SK-N-SH (cell line): ENCODE measurements at regions of chr5 and their contacts with region 1.

Region 1: GRCh38 chr5:177113566-177114424 is 19.8 kb upstream of the NSD1 start:
- DNase-seq: peak; percentile 89
- H3K4me3 ChIP-seq: no peak overlapping the region; a peak in 1 of 4 replicates
- H3K27ac ChIP-seq: no peak overlapping the region
- H3K4me1 ChIP-seq: no peaks in the 10 kb centered on the region; a peak in 1 of 4 replicates
- H3K27me3 ChIP-seq: no peaks in the 10 kb centered on the region
- CTCF ChIP-seq: peak; percentile 99
- EP300 ChIP-seq: no peak
- RAD21 ChIP-seq: peak; percentile 99

Region 2: DNA sequence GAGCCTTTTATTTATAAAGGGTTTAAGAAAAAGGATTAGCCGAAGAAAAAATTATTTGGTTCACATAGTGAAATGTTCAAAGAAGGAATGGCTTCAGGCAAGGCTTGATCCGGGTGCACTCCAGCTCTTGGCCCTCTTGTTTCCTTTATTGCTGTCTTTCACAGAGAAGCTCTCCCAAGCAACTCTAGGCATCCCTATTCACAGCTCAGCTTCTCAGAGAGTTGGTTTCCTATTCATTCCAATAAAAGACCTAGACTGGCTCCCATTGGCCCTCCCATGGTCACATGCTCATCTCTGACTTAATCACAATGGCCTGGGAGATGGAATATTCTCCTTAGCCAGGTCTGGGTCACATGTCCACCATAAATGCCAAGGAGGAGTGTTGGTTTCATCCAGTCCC is 36.5 kb before region 1 on chr5:
- CTCF ChIA-PET with region 1: interaction called, 141 read pairs
- POLR2A ChIA-PET with region 1: no interaction called
- DNase-seq: no peak
- H3K4me3 ChIP-seq: no peak overlapping the region
- H3K27ac ChIP-seq: no peak overlapping the region
- H3K4me1 ChIP-seq: no peaks in the 10 kb centered on the region
- H3K27me3 ChIP-seq: no peaks in the 10 kb centered on the region
- CTCF ChIP-seq: no peak
- EP300 ChIP-seq: no peak
- RAD21 ChIP-seq: no peak

Region 3: GRCh38 chr5:177094224-177095087 is 19.3 kb before region 1 on chr5:
- CTCF ChIA-PET with region 1: interaction called, 87 read pairs
- POLR2A ChIA-PET with region 1: no interaction called
- DNase-seq: peak; percentile 66
- H3K4me3 ChIP-seq: no peak overlapping the region
- H3K27ac ChIP-seq: no peak overlapping the region
- H3K4me1 ChIP-seq: peaks cover 0 to 16% of the 10 kb centered on the region in 2 experiments; a peak in 1 of 4 replicates
- H3K27me3 ChIP-seq: no peaks in the 10 kb centered on the region
- CTCF ChIP-seq: no peak
- EP300 ChIP-seq: no peak
- RAD21 ChIP-seq: no peak

Region 4: DNA sequence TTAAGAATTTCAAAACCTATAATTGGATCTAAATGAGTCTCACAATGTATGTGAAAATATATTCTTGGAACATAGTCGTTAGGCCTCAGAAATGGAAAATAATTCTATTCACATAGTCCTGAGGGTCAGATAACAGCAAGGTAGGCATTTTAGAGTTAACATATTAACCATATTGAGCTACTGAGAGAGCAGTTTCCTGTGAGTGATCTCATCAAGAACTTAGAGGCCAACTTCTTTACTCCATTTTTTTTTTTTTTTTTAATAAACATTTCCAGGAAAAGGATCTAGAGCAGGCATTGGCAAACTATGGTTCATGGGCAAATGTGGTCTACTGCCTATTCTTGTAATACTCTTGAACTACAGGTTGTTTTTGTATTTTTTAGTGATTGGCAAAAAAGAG is 163.1 kb after region 1 on chr5:
- CTCF ChIA-PET with region 1: interaction called, 10 read pairs
- POLR2A ChIA-PET with region 1: no interaction called
- DNase-seq: no peak
- H3K4me3 ChIP-seq: no peak overlapping the region
- H3K27ac ChIP-seq: no peak overlapping the region
- H3K4me1 ChIP-seq: no peaks in the 10 kb centered on the region
- H3K27me3 ChIP-seq: no peaks in the 10 kb centered on the region
- CTCF ChIP-seq: no peak
- EP300 ChIP-seq: no peak
- RAD21 ChIP-seq: no peak

Region 5: DNA sequence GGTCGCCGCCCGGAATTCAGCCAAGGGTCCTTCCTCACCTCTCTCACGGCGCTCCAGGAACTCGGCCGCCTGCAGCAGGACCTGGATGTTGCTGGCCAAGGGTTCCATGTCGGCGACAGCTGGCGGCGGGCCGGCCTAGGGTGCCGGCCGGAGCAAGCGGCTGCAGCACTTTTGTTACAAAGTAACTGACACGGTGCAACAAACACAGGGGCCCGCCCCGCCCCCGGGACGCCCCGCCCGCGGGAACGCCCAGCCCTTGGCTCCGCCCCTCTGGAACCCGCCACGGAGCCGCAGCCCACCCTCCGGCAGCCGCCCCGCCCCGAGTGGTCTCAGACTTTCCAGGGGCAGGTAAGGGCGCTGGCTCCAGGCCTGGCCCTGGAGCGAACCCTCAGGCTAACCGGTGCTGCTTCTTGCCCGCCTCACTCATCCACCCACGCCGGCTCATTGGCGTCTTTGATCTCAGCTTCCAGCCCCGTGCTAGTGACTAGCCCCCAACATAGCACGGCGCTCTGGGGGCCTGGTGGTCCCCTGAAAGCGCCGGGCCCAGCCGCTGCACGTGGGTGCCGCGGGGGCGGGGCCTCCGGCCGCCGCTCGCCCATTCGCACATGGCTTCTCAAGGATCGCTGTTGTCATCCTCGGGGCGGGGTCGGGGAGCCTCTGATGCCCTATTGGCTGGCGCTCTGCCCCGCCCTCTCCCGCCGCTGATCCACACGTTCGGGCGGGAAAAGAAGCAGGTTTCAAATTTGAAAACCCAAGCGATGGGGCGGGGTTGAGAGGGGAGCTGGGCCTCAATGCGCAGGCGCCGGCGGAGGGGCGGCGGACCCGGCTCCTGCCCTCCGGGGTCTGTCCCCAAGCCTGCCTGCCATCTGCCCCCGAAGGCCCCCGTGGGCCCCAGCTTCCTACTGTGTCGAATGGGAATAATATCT is 198.2 kb after region 1 on chr5 and contains the start of gene MXD3:
- CTCF ChIA-PET with region 1: interaction called, 39 read pairs
- POLR2A ChIA-PET with region 1: interaction called, 4 read pairs
- DNase-seq: peak; percentile 97
- H3K4me3 ChIP-seq: peak within 1 kb of the TSS; percentile 59 to 84
- H3K27ac ChIP-seq: peak within 1 kb of the TSS; percentile 73 to 88
- H3K4me1 ChIP-seq: peaks cover 4 to 25% of the 10 kb centered on the region in 2 experiments; a peak in 1 of 4 replicates
- H3K27me3 ChIP-seq: no peaks in the 10 kb centered on the region
- CTCF ChIP-seq: no peak
- EP300 ChIP-seq: 0 out of 4 replicates have a peak, but pooled peaks of 1 of the 2 experiments have one; percentile 39
- RAD21 ChIP-seq: no peak
- polyA plus RNA-seq, gene MXD3: 22.6 and 23.1 TPM in 2 replicates

Region 6: GRCh38 chr5:177390363-177391300 is 276.8 kb after region 1 on chr5:
- CTCF ChIA-PET with region 1: interaction called, 14 read pairs
- POLR2A ChIA-PET with region 1: no interaction called
- DNase-seq: peak; percentile 95
- H3K4me3 ChIP-seq: no peak overlapping the region; a peak in 1 of 4 replicates
- H3K27ac ChIP-seq: no peak overlapping the region
- H3K4me1 ChIP-seq: peaks cover 0 to 3% of the 10 kb centered on the region in 2 experiments; a peak in 1 of 4 replicates
- H3K27me3 ChIP-seq: no peaks in the 10 kb centered on the region
- CTCF ChIP-seq: peak; percentile 88
- EP300 ChIP-seq: no peak
- RAD21 ChIP-seq: peak; percentile 95